Ovary (tissue), 10 donors: ENCODE measurements at regions of chr17 and their contacts with region 1.

Region 1: DNA sequence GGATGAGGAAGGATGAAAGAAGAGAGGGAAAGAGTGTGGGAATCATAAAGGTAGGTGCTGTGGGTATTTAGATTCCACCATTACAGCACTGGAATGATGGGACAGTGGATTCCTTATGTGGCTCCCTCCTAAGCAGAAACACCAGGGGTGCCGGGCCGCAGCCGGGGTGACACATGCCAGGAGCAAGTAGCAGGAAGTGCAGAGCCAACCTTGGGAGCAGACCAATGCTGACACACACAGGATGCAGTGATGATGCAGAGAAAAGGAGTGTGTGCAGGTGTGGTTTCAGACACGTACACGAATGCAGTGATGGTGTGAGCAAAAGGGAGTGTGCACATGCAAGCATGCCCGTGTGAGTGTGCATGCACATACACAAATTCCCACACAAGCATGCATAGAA is 338.0 kb downstream of the SLC39A11 start:
- DNase-seq: no peak
- H3K4me3 ChIP-seq: no peak overlapping the region
- H3K27ac ChIP-seq: no peak overlapping the region
- H3K4me1 ChIP-seq: no peaks in the 10 kb centered on the region
- H3K27me3 ChIP-seq: no peaks in the 10 kb centered on the region
- CTCF ChIP-seq: no peak
- EP300 ChIP-seq: no peak
- POLR2A ChIP-seq: no peak

Region 2: DNA sequence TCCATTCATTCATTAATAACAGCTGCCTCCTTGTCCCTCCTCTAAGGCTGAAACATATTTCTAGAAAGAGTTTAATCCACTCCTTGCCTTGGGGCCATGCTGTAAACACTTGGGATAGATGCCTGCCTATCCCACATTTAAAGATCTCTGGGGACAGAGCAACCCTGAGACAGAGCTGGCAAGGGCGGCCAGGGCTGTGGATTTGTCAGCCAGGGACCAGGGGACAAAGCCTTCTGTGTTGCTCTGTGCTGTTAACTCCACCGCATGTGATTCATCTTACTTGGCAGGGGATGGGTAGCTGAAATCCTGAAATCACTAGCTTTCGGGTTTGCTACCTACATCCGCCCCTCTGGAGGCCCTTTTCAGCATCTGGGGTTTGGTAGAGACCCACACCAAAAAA is 55.0 kb before region 1 on chr17:
- intact Hi-C with region 1: loop called in 1 of 4 experiments (anchors 10 kb)
- DNase-seq: no peak
- H3K4me3 ChIP-seq: no peak overlapping the region
- H3K27ac ChIP-seq: no peak overlapping the region
- H3K4me1 ChIP-seq: no peaks in the 10 kb centered on the region
- H3K27me3 ChIP-seq: no peaks in the 10 kb centered on the region
- CTCF ChIP-seq: no peak
- EP300 ChIP-seq: no peak
- POLR2A ChIP-seq: no peak